ENCODE measurements at regions of chr17 and their contacts with region 1.

Region 1: DNA sequence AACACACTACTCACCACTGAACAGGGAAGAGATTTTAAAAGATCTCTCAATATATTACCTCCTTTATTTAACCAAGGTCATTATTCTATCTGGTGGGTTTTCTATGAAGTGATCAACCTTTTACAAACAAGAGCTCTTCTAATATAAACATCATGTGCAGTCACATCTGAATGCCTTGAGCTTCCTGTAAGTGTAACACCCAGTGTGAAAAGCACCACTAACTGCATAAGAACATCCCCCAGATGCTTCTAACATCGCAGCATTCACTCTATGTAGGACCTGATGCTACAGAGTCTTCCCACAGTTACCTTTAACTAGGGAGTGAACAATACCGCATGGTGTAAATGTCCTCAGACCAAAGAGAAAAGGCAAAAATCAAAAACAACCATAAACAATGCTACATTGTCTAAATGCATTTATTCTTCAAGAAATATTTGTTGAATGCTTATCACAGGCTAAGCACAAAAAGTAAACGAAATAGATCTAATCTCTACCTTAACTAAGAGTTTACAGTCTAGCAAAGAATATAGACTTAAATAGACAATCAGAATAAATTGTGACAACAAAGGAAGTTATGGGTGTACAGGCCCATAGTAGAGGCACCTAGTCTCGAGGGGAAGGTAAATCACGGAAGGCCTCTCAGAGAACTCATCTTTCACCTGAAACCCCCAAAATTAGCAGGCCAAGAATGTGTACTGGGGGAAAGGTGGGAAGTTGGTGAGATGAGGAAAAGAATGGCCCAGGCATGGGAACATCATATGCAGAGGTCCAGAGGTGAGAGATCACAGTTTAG is 16.2 kb downstream of the SKAP1 start:
- DNase-seq: peak in 2 of 10 donors; percentile 10 to 25
- ATAC-seq: peak; percentile 55 to 81
- H3K4me3 Mint-ChIP-seq: peak overlapping the region; percentile 20 to 82 (median 68)
- H3K27ac Mint-ChIP-seq: peak overlapping the region; percentile 85 to 96 (median 92)
- H3K4me1 Mint-ChIP-seq: peaks cover 35 to 87% (median 84%) of the 10 kb centered on the region in 4 donors
- H3K27me3 Mint-ChIP-seq: no peaks in the 10 kb centered on the region

Region 2: DNA sequence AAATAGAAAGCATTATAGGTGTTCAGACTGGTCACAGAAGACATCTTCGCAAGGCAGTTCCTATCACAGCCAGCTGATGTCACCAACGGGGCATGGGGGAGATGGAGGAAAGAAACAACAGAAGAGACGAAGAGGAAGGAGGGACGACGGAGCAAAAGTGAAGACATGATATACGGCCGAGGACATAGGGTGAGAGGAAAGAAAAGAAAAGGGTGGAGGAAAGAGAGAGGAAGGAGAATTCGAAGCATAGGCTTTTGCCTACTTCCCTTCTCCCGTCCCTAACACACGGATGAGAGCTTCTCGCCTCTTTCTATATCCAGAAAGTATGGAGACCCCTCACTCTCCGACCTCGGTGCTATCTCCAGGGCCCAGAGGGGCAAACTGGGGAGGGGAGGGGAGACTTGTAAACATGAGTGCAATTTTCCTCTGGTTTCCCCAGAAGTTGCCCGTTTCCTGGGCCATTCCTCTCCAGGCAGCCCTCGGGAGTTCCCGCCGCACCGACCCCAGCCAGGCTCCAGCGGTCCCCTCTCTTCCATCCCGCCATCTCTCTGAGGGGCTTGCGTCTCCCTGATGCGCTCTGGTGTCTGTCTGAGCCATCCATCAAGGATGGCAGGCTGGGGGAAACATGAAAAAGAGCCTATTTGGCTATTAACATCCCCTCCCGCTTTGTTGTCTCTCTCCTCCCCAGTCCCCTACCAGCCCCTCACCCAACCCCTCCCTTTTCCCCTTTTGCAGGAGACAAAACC is 402.2 kb before region 1 on chr17:
- POLR2A ChIA-PET with region 1: no interaction called
- DNase-seq: peak in 9 of 10 donors; percentile 6 to 74 (median 38)
- ATAC-seq: peak; percentile 65 to 78
- H3K4me3 Mint-ChIP-seq: peak overlapping the region; percentile 70 to 94 (median 86)
- H3K27ac Mint-ChIP-seq: peak overlapping the region in 6 of 10 donors; percentile 13 to 60 (median 26)
- H3K4me1 Mint-ChIP-seq: peaks cover 10 to 16% (median 12%) of the 10 kb centered on the region in 4 donors
- H3K27me3 Mint-ChIP-seq: peaks cover 33 to 64% (median 46%) of the 10 kb centered on the region in 5 donors

Region 3: GRCh38 chr17:48453447-48453846 is 39.6 kb after region 1 on chr17:
- POLR2A ChIA-PET with region 1: interaction called, 16 read pairs
- DNase-seq: peak in 4 of 10 donors; percentile 33 to 80 (median 73)
- ATAC-seq: peak; percentile 84 to 90
- H3K4me3 Mint-ChIP-seq: peak overlapping the region; percentile 51 to 88 (median 76)
- H3K27ac Mint-ChIP-seq: peak overlapping the region; percentile 36 to 96 (median 86)
- H3K4me1 Mint-ChIP-seq: peaks cover 27 to 78% (median 74%) of the 10 kb centered on the region in 4 donors
- H3K27me3 Mint-ChIP-seq: no peaks in the 10 kb centered on the region

Region 4: GRCh38 chr17:48505787-48506645 is 92.2 kb after region 1 on chr17:
- POLR2A ChIA-PET with region 1: no interaction called
- DNase-seq: peak in 1 of 10 donors; percentile 12
- ATAC-seq: peak; percentile 72 to 82
- H3K4me3 Mint-ChIP-seq: no peak overlapping the region
- H3K27ac Mint-ChIP-seq: peak overlapping the region in 3 of 10 donors; percentile 9 to 82 (median 76)
- H3K4me1 Mint-ChIP-seq: peaks cover 0 to 19% (median 1%) of the 10 kb centered on the region in 4 donors
- H3K27me3 Mint-ChIP-seq: peaks cover 6 to 35% (median 14%) of the 10 kb centered on the region in 5 donors

Measured in naive thymus-derived CD8-positive, alpha-beta T cell (primary cell).